ENCODE measurements at regions of chrX and their contacts with region 1.

Region 1: DNA sequence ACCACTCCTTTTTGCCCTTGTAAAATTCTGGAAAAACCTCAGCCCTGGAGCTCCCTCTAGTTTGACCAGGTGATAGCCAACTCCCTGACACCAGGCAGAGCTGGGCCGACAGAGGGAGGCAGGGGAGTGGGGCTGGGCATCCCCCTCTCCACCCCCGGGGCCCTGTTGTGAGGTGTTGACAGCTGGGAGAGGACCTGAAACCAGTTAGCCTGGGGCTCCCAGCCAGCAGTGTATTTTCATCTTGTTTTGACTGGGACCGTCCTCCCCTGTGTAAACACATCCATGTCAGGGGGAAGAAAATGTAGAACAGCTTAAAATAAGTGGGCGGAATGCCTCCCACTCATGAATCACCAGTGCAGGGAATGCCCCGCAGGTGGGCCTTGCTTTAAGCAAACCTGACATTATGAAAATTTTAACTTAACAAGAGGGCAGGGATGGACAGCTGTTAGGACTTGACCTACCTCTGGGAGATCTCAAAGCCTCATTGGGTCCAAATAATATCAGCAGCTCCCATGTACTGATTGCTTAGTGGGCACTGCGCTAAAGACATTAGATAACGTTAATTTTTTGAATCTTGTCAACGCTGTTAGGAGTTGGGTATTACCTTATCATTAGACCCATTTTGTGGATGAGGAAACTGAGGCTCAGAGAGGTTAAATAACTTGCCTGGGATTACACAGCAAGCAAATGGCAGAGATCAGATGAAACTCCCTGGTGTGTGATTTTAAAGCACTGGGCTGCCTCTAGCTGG is 45.9 kb downstream of the TSC22D3 start:
- DNase-seq: peak; percentile 75
- ATAC-seq: peak; percentile 80

Region 2: DNA sequence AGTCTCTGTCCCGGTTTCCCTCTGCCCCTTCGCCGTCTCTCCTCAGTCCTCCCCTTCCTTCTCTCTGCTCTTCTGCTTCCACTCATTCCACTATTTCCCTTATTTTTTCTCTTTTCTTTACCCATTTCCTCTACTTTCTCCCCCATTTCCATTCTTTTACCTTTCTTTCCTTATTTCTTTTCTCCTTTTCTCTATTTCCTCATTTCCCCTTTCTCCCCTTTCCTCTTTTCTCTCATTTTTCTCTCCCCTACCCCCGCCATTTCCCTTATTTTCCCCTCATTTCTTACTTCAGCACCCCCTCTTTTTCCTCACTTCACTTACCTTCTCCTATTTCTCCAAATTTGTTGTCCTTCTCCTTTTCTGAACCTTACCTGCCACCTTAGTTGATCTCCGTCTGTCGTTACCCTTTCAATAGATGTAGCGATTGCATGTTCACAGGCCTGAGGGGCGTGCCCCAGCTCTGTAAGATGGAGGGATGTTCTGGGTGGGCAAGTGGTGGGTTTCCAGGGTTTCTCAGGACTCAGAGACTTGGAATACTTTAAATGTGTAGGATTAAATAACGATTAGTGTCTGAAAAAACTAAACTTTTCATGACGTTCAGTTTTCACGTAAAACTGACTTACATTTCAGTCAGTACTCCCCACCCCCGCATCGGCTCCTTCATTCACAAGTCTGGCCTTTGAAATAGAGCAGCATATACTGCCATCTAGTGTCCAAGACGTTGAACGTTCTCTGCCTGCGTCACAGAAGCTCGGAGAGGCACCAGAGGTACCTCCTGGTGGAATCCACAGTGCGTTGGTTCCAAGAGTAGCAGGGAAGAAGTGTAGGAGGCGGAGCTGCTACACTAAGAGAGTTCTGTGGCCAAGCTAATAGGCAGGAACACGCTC is 47.2 kb after region 1 on chrX:
- intact Hi-C with region 1: loop called (anchors 5 kb)
- DNase-seq: peak; percentile 71
- ATAC-seq: peak; percentile 78

Region 3: GRCh38 chrX:108148524-108148923 is 418.8 kb after region 1 on chrX:
- intact Hi-C with region 1: no loop called
- DNase-seq: no peak
- ATAC-seq: no peak